ENCODE measurements at regions of chr6 and their contacts with region 1.

Region 1: GRCh38 chr6:52664186-52664990 is 6.5 kb upstream of the TMEM14A start:
- DNase-seq: peak; percentile 93
- H3K4me3 Mint-ChIP-seq: no peak overlapping the region
- H3K27ac Mint-ChIP-seq: no peak overlapping the region
- H3K4me1 Mint-ChIP-seq: peaks cover 4% of the 10 kb centered on the region
- H3K27me3 Mint-ChIP-seq: no peaks in the 10 kb centered on the region

Region 2: DNA sequence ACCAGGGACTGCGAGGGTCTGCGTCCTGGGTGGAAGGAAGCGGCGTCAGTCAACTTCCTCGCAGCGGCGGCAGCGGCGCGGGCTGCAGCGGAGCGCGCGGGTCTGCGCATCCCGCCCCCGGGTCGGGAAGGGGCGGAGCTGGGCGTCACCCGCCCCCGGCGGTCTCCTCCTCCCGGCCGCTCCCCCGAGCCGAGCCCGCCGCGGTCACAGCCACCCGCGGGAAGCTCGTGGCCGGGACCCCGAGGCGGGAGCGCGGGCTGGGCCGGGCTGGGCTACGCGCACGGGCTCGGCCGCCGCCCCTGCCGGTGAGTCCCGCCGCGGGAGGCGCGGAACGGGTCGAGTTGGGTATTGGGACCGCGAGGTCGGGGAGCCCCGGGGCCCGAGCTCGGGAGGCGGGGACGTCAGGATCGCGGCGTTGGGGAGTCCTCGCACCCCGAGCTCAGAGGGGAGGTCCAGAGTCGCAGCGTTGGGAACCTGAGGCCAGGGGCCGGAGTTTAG is 302.4 kb before region 1 on chr6 and contains the start of gene PAQR8:
- intact Hi-C with region 1: loop called (anchors 5 kb)
- DNase-seq: peak; percentile 96
- H3K4me3 Mint-ChIP-seq: peak within 1 kb of the TSS; percentile 99
- H3K27ac Mint-ChIP-seq: peak within 1 kb of the TSS; percentile 92
- H3K4me1 Mint-ChIP-seq: peaks cover 25% of the 10 kb centered on the region
- H3K27me3 Mint-ChIP-seq: no peaks in the 10 kb centered on the region
- total RNA-seq, gene PAQR8: 4.5 and 4.8 TPM in 2 replicates

Region 3: GRCh38 chr6:52419809-52420670 is 244.3 kb before region 1 on chr6 and contains the start of gene EFHC1:
- intact Hi-C with region 1: loop called (anchors 1 kb)
- DNase-seq: peak; percentile 100
- H3K4me3 Mint-ChIP-seq: no peak within 1 kb of the TSS
- H3K27ac Mint-ChIP-seq: no peak within 1 kb of the TSS
- H3K4me1 Mint-ChIP-seq: peaks cover 23% of the 10 kb centered on the region
- H3K27me3 Mint-ChIP-seq: peaks cover 11% of the 10 kb centered on the region
- total RNA-seq, gene EFHC1: 1.5 and 1.7 TPM in 2 replicates

Region 4: DNA sequence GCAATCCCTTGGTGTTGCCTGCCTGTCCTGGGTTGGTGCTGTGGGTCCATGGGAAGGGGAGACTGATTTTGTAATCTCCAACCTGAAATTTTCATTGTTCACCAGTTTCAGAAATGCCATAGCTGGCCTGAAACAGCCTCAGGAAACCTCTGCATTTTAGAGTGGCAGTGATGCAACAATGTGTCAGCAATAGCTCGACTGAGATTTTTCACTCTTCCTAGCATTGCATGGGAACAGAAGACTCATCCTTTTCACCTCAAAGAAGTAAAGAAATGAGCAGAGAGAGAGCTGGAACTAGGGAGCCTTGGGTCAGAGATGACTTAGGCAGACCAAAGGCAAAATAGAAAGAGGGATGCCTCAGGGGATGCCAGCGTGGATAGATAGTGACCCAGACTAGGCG is 17.2 kb before region 1 on chr6:
- intact Hi-C with region 1: loop called (anchors 1 kb)
- DNase-seq: no peak
- H3K4me3 Mint-ChIP-seq: no peak overlapping the region
- H3K27ac Mint-ChIP-seq: no peak overlapping the region
- H3K4me1 Mint-ChIP-seq: peaks cover 2% of the 10 kb centered on the region
- H3K27me3 Mint-ChIP-seq: peaks cover 15% of the 10 kb centered on the region